Right ventricle myocardium superior (tissue), 1 donor: ENCODE measurements at regions of chr13 and their contacts with region 1.

Region 1: DNA sequence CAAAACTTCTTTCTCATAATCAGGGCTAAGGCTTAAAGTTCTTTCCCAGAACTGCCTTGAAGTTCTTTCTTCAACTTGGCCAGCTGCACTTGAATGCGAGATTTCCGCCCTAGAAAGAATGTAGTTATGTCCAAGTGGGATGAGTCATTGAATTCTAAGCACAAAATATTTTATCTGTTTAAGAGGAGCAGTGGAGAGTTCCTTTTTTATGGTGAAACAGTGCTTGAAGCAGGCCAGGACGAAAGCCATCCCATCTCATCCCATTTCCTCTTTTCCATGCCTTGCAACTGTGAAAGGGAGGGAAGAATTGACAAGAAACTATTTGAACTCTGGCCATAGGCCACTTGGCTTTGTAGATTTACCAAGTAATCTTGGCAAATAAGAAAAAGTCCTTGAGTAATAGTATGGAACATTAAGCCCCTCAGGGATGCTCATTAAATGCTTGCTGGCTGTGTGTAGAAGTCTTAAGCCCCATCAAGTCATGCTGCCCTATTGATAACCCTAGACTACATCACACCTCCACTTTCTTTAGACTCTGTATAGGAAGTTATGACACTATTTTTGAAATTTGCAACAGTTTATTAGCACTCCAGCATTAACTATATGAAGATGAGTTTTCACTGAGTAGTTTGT is 174.5 kb downstream of the KCTD12 start:
- DNase-seq: peak; percentile 35
- ATAC-seq: peak; percentile 93

Region 2: DNA sequence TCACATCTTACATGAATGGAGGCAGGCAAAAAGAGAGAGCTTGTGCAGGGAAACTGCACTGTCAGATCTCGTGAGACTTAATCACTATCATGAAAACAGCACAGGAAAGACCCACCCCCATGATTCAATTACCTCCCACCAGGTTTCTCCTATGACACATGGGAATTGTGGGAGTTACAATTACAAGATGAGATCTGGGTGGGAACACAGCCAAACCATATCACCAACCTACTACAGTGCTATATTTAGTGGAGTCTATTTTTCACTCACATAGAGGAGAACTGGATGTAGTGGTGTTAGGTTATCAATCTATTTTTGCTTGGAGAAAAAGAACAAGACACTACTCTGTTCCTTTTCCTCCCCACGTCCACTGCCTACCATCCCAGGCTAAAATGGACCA is 102.0 kb before region 1 on chr13:
- intact Hi-C with region 1: no loop called
- DNase-seq: no peak
- ATAC-seq: no peak

Region 3: GRCh38 chr13:76622315-76623040 is 89.2 kb before region 1 on chr13:
- intact Hi-C with region 1: no loop called
- DNase-seq: no peak
- ATAC-seq: peak; percentile 63

Region 4: GRCh38 chr13:76812206-76812897 is 100.7 kb after region 1 on chr13:
- intact Hi-C with region 1: loop called (anchors 10 kb)
- DNase-seq: peak; percentile 85
- ATAC-seq: peak; percentile 92

Region 5: DNA sequence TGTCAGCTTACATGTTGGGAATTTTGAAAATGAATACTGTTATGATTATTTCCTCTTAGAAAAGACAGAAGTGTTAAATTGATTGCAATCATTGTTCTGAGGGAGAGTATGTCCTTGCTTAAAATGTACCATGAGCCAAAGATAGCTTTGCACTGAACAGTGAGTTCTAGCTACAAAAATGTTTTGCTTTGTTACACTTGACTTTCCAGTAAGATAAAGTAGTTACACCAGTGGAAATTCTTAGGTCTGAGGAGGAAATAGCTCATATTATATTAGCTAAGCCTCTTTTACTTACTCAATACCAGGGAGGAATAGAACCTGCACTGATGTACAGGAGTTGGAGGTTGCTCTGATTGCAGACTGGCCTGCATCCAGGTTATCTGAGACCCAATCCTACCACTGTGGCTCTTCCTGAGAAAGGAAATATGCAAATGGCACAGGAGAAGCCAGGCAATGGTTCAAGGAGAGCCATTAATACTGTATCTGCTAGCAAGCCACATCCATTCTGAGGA is 368.3 kb after region 1 on chr13:
- intact Hi-C with region 1: no loop called
- DNase-seq: no peak
- ATAC-seq: peak; percentile 38